ENCODE measurements at regions of chr14 and their contacts with region 1.

Region 1: DNA sequence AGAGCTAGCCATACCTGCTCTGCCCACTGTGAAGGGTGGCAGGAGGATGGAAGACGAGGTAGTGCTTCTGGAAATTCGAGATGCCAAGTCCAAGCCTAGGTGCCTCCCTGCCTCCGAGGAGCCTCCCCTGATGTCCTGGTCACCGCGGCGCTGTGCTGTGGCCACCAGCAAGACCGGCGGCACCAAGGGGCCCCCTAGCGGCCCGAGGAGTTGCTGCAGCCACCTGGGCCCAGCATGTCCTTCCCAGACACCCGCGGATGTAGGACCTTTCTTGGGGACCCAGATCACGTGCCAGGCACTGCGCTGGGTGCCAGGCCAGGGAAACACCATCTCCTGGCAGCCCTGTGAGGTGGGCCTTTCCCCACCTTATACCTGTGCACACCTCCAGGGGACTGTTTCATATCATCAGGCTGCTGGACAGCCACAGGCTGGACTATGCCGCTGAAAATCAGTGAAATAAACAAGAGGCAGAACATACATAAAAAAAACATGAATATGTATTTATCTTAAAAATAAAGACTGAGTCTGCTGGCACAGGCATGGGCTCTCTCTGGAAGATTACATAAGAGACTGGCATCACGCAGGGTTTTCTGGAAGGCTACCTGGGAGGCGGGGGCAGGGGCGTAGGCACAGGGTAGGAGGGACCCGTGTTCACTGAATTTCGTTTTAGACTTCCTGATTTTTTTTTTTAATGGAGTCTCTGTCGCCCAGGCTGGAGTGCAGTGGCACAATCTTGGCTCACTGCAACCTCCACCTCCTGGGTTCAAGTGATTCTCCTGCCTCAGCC is 15.9 kb upstream of the HHIPL1 start:
- DNase-seq: peak; percentile 82
- ATAC-seq: peak; percentile 98
- H3K4me3 ChIP-seq: peak overlapping the region; percentile 9; the same call in 1 of the 2 replicates
- H3K27ac ChIP-seq: no peak overlapping the region
- H3K4me1 ChIP-seq: 0 out of 2 replicates have a peak, but pooled peaks cover 3% of the 10 kb centered on the region
- H3K27me3 ChIP-seq: no peaks in the 10 kb centered on the region
- CTCF ChIP-seq: peak; percentile 97

Region 2: DNA sequence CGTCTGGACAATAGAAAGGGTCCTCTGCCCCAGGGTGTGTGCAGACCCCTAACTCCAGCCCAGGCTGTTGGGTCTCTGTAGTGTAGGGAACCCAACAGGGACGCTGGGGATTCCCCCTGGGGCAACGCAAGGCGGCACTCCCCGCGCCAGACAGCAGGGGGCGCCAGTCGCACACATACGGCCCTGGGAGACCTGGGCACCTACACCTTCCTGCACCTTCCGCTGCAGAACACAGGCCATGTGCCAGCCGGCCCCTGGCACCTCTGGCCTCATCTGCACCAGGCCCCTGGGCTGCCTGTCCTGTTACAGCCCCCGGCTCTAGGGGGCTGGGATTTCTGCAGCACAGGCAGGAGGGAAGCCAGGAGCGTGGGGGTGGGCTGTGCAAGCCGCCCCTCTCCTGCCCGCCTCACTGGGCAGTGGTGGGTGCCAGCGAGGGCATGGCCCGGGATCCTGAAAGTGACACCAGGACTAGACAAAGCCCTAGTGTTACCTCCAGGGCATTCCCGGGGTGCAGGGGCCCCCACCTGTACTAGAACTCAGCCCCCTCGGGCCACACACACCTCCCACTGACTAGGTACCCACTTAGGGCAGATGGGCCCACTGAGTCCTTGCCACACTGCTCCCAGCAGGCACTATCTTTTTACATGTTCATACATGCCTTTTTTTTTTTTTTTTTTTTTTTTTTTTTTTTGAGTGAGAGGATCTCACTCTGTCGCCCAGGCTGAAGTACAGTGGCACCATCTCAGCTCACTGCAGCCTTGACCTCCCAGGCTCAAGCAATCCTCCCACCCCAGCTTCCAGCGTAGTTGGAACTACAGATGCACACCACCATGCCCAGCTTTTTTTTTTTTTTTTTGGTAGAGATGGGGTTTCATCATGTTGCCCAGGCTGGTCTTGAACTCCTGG is 110.3 kb before region 1 on chr14:
- CTCF ChIA-PET with region 1: interaction called, 3 read pairs
- POLR2A ChIA-PET with region 1: no interaction called
- intact Hi-C with region 1: loop called (anchors 1 kb)
- DNase-seq: peak; percentile 77
- ATAC-seq: peak; percentile 54
- H3K4me3 ChIP-seq: no peak overlapping the region
- H3K27ac ChIP-seq: no peak overlapping the region
- H3K4me1 ChIP-seq: peaks cover 19% of the 10 kb centered on the region
- H3K27me3 ChIP-seq: no peaks in the 10 kb centered on the region
- CTCF ChIP-seq: peak; percentile 89

Region 3: DNA sequence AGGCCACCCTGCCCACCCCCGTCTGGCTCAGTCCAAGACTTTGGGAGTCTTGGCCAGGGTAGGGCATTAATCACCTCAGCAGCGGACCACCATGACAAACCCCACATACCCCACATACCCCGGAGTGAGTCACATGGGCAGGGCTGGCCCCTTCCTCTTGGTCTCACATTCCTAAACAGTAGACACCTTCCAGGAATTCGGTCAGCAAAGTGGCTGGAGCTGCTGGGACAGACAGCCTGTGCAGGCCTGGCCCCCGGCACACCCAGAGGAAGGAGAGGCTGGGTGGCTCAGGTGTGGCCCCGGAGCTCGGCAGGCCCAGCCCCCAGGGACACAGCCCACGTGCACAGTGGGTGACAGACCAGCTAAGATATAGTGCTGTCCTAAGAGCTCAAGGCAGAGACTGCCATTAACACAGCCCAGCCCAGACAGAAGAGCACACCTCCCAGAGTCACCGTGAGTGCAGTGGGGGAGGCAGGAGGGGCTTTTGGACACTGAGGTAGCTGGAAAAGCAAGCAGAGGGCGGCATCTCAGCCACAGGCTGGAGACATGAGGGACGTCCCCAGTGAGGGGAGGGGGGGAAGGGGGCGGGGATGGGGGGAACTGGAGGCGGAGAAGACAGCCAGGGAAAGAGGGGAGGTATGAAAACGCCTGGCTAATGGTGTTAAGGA is 49.0 kb before region 1 on chr14:
- CTCF ChIA-PET with region 1: no interaction called
- POLR2A ChIA-PET with region 1: no interaction called
- intact Hi-C with region 1: no loop called
- DNase-seq: peak; percentile 96
- ATAC-seq: peak; percentile 66
- H3K4me3 ChIP-seq: peak overlapping the region; percentile 37; the same call in 1 of the 2 replicates
- H3K27ac ChIP-seq: peak overlapping the region; percentile 84
- H3K4me1 ChIP-seq: peaks cover 60% of the 10 kb centered on the region
- H3K27me3 ChIP-seq: no peaks in the 10 kb centered on the region
- CTCF ChIP-seq: no peak

Region 4: GRCh38 chr14:99644723-99645550 is 15.9 kb after region 1 on chr14 and contains the start of gene HHIPL1:
- CTCF ChIA-PET with region 1: no interaction called
- POLR2A ChIA-PET with region 1: no interaction called
- intact Hi-C with region 1: no loop called
- DNase-seq: peak; percentile 10
- ATAC-seq: peak; percentile 63
- H3K4me3 ChIP-seq: peak within 1 kb of the TSS; percentile 55
- H3K27ac ChIP-seq: no peak within 1 kb of the TSS
- H3K4me1 ChIP-seq: no peaks in the 10 kb centered on the region; the same call in 1 of the 2 replicates
- H3K27me3 ChIP-seq: no peaks in the 10 kb centered on the region
- CTCF ChIP-seq: no peak
- total RNA-seq, gene HHIPL1: 0.84 and 0.92 TPM in 2 replicates